K562 (cell line): ENCODE measurements at regions of chr20 and their contacts with region 1.

Region 1: GRCh38 chr20:44901974-44902373 is 7.9 kb upstream of the PABPC1L start:
- DNase-seq: peak in 1 of 4 experiments; percentile 24
- ATAC-seq: no peak
- H3K4me3 ChIP-seq: no peak overlapping the region
- H3K27ac ChIP-seq: no peak overlapping the region
- H3K4me1 ChIP-seq: peaks cover 0 to 2% of the 10 kb centered on the region in 2 experiments; a peak in 2 of 5 replicates
- H3K27me3 ChIP-seq: no peaks in the 10 kb centered on the region
- CTCF ChIP-seq: no peak
- EP300 ChIP-seq: no peak
- POLR2A ChIP-seq: no peak
- RAD21 ChIP-seq: no peak

Region 2: DNA sequence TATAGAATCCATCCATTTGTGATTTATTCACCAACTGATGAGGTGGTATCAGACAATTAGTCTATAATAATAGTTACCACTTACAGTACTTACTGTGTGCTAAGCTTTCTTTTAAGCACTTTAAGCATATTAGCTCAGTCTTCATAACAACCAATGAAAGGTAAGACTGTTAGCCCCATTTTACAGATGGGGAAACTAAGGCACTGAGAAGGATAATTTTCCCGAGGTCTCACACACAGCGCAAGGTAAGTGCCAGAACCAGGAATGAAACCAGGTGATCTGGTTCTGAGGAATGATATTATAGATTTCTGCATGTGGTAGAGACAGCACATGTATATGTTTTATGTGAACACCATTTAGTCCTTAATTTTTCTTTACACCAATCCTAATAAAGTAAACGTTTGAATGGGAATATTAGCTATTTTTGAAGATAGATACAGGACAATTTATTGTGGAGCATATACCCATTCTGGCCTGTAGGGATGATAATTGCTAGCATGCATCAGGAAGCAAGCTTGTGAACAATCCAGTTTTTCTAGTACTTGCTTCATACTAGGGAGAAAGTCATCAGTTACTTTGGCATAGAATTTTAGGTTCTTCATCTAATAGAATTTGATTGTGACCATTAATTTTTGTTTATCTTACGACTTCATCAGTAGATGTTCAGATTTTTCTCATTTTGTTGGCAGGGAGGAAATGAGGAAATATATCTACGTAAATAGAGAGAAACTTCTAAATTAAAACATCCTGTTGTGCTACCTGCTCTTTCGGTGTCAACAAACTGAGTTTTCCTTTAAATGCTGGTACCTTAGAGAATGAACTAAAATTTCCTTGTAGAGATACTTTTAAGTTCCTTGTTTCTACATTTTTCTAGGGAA is 13.5 kb before region 1 on chr20:
- CTCF ChIA-PET with region 1: no interaction called
- POLR2A ChIA-PET with region 1: interaction called, 27 read pairs
- in situ Hi-C with region 1: no loop called
- intact Hi-C with region 1: no loop called
- DNase-seq: no peak
- ATAC-seq: no peak
- H3K4me3 ChIP-seq: no peak overlapping the region
- H3K27ac ChIP-seq: no peak overlapping the region
- H3K4me1 ChIP-seq: peaks cover 8 to 23% of the 10 kb centered on the region in 2 experiments
- H3K27me3 ChIP-seq: no peaks in the 10 kb centered on the region
- CTCF ChIP-seq: no peak
- EP300 ChIP-seq: no peak
- POLR2A ChIP-seq: no peak
- RAD21 ChIP-seq: no peak

Region 3: GRCh38 chr20:45538209-45538799 is 636.3 kb after region 1 on chr20:
- CTCF ChIA-PET with region 1: no interaction called
- POLR2A ChIA-PET with region 1: no interaction called
- in situ Hi-C with region 1: no loop called
- intact Hi-C with region 1: no loop called
- DNase-seq: peak in 1 of 4 experiments; percentile 12
- ATAC-seq: no peak
- H3K4me3 ChIP-seq: no peak overlapping the region
- H3K27ac ChIP-seq: no peak overlapping the region
- H3K4me1 ChIP-seq: no peaks in the 10 kb centered on the region
- H3K27me3 ChIP-seq: peaks cover 0 to 4% of the 10 kb centered on the region in 2 experiments; a peak in 1 of 5 replicates
- CTCF ChIP-seq: peak in 2 of 3 experiments; percentile 24 to 26; a peak in 1 of 6 replicates
- EP300 ChIP-seq: no peak
- POLR2A ChIP-seq: no peak
- RAD21 ChIP-seq: no peak